ENCODE measurements at regions of chr11 and their contacts with region 1.

Region 1: GRCh38 chr11:59263225-59263894 is 50.6 kb upstream of the MPEG1 start:
- DNase-seq: peak in 5 of 6 donors; percentile 38 to 76 (median 45)
- ATAC-seq: peak; percentile 53 to 92 (median 77)
- H3K4me3 ChIP-seq: no peak overlapping the region
- H3K27ac ChIP-seq: no peak overlapping the region
- H3K4me1 ChIP-seq: no peaks in the 10 kb centered on the region
- H3K27me3 ChIP-seq: no peaks in the 10 kb centered on the region
- CTCF ChIP-seq: peak in 3 of 4 donors; percentile 34 to 36 (median 35)

Region 2: GRCh38 chr11:58866788-58867187 is 396.6 kb before region 1 on chr11:
- intact Hi-C with region 1: no loop called
- DNase-seq: no peak
- ATAC-seq: no peak
- H3K4me3 ChIP-seq: no peak overlapping the region
- H3K27ac ChIP-seq: no peak overlapping the region
- H3K4me1 ChIP-seq: no peaks in the 10 kb centered on the region
- H3K27me3 ChIP-seq: no peaks in the 10 kb centered on the region
- CTCF ChIP-seq: no peak

Region 3: DNA sequence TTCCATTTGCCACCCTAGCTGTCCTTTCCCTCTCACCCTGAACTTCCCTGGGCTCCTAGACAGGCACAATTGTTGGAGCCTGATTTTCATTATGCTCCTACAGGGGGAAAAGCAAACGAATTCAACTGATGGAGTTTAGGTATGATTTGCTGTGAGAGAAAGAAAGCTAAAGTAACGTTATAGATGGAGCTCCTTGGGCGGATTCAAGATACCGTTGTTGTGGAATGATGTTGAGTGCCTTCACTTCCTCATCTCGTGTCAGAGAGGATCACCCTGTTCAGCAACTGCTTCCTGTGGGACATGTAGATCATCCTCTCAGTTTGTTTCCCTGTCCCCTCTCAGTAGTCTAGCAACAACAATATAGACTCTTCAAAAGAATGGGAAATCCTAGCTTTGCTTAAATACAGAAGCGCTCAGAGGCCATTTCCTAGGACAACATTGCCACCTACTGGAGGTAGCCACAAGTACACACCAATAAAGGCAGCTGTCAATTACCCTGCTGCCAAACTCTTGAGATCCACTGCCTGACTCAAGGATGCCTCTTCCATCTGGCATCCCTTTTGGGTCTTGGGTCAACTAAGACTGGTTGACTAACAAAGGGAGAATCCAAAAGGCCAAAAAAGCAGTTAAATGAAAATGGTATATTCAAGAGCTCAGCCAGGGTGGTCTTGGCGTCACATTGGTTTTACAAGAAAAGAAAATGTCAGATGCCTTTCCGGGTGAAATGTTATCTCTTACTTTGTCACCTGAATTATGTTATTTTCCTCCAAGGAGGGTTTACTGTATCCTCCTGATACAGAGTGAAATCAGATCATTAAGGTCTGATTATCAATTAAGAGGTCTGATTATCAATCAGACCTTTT is 104.9 kb before region 1 on chr11:
- intact Hi-C with region 1: no loop called
- DNase-seq: peak in 2 of 6 donors; percentile 50 to 61
- ATAC-seq: peak; percentile 72 to 98 (median 94)
- H3K4me3 ChIP-seq: no peak overlapping the region
- H3K27ac ChIP-seq: no peak overlapping the region
- H3K4me1 ChIP-seq: no peaks in the 10 kb centered on the region
- H3K27me3 ChIP-seq: no peaks in the 10 kb centered on the region
- CTCF ChIP-seq: peak; percentile 64 to 76 (median 69)

Region 4: DNA sequence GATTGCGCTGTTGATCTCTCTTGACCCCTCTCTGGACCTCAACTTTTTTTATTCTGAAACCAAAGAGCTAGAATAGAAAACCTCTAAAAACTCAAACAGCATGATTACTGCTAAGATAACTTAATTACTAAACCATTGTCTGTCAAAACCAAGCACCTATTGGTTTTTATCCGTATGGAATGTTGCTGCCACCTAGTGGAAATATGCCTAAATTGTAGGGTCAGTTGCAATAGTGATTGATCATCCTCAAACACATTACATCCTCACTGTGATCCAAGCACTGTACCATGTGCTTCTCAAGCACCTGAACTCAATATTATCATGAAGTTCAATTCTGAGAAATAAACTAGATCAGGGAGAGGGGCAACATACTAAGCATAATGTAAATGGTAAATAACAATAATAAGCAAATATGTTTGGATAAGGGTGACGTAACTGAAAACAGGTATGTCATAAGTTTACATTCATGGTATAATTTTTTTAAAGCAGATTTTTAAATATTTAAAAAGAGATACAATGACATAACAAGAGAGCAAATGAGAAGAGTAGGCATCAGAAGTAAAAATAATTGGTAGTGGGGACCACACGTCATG is 166.7 kb after region 1 on chr11:
- intact Hi-C with region 1: loop called in 2 of 3 experiments (anchors 5 to 10 kb)
- DNase-seq: peak in 3 of 6 donors; percentile 8 to 42 (median 20)
- ATAC-seq: peak; percentile 67 to 90 (median 80)
- H3K4me3 ChIP-seq: no peak overlapping the region
- H3K27ac ChIP-seq: no peak overlapping the region
- H3K4me1 ChIP-seq: peaks cover 0 to 3% (median 0%) of the 10 kb centered on the region in 3 donors
- H3K27me3 ChIP-seq: no peaks in the 10 kb centered on the region
- CTCF ChIP-seq: peak; percentile 45 to 80 (median 73)

Region 5: DNA sequence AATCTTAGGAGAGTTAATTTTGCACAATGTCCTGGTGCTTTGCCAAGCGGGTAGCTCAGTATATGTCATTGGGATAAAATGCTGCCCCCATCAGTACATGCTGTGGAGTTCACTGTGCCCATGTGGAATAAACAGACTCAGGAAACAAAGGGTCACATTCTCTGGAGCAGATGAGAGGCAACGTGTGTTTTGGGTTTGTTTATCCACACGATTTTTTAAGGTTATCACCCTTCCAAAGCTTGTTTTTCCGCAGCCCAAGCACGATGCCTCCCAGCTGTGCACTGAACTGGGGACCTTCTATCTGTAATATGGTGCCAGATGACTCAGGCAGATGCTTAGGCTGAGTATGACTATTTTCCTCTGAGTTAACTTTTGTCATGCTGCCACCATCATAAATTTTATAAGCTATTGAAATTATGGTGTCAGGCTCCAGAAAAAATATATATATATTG is 199.9 kb after region 1 on chr11:
- intact Hi-C with region 1: no loop called
- DNase-seq: no peak
- ATAC-seq: no peak
- H3K4me3 ChIP-seq: no peak overlapping the region
- H3K27ac ChIP-seq: no peak overlapping the region
- H3K4me1 ChIP-seq: no peaks in the 10 kb centered on the region
- H3K27me3 ChIP-seq: no peaks in the 10 kb centered on the region
- CTCF ChIP-seq: no peak

Region 6: DNA sequence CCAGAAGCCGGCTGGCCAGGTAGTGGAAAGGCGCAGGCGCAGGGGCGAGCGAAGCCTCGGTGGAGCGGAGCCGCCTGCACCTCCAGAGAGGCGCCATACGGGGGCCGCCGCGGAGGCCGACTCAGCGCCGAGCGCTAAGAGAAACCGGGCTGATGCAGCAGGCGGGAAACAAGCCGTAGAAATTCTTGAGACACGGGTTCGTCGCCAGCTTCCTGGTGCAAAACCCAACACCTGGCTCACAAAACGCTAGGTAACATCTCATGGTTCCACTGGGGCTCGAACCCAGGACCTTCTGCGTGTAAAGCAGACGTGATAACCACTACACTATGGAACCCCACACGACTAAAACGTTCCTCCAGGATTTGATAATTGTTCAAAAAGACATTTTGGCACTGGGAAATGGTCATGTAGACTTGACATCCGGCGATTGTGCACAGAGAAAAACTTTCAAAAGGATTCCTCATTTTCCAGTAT is 287.0 kb after region 1 on chr11:
- intact Hi-C with region 1: no loop called
- DNase-seq: peak; percentile 80 to 92 (median 86)
- ATAC-seq: peak; percentile 80 to 92 (median 89)
- H3K4me3 ChIP-seq: peak overlapping the region; percentile 13 to 40 (median 34)
- H3K27ac ChIP-seq: peak overlapping the region; percentile 69 to 84 (median 74)
- H3K4me1 ChIP-seq: no peaks in the 10 kb centered on the region
- H3K27me3 ChIP-seq: no peaks in the 10 kb centered on the region
- CTCF ChIP-seq: peak in 2 of 4 donors; percentile 24 to 26